ENCODE measurements at regions of chr22 and their contacts with region 1.

Region 1: DNA sequence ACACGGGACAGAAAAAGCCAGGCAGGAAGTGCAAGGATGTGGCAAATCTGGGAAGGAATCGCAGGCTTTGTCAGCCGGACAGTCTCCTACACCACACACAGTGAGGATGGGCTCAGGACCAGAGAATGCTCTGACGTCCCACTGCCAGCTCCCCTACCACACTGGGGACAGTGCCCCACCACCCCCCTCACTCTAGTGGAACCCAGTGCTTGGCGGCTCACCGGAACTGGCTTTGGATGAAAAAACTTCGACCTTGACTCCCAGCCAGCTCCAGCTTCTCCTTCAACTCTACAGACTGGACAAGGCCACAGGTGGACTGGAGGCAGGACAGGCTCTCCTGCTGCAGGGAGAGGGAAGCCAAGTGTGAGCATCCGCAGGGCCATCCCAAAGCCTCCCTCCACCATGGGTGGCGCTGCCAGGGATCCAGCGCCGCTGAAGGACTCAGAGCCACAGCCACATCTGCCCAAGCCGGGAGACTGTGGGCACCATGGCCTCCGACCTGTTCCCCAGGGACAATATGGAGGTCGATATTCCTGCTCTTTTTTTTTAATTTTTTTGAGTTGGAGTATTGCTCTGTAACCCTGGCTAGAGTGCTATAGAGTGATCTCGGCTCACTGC is 24.0 kb downstream of the SERHL2 start:
- DNase-seq: no peak
- H3K4me3 ChIP-seq: no peak overlapping the region
- H3K27ac ChIP-seq: no peak overlapping the region
- H3K4me1 ChIP-seq: peaks cover 3% of the 10 kb centered on the region
- H3K27me3 ChIP-seq: no peaks in the 10 kb centered on the region
- CTCF ChIP-seq: no peak
- POLR2A ChIP-seq: no peak

Region 2: DNA sequence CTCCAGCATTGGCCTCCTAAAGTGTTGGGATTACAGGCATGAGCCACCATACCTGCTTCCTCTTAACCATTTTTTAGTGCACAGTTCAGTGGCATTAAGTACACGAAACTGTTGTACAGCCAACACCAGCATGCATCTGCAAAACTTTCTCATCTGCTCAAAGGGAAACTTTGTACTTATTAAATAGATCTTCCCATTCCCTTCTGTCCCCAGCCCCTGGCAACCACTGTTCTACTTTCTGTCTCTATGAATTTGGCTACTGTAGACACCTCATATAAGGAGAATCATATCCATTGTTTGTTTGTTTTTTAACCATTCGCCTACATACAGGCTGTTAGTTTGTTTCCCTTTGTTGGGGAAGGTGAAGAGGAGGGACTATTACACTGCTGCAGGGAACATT is 1491.9 kb before region 1 on chr22:
- CTCF ChIA-PET with region 1: no interaction called
- POLR2A ChIA-PET with region 1: no interaction called
- dilution Hi-C with region 1: no loop called
- intact Hi-C with region 1: loop called (anchors 10 kb)
- DNase-seq: no peak
- H3K4me3 ChIP-seq: no peak overlapping the region
- H3K27ac ChIP-seq: no peak overlapping the region
- H3K4me1 ChIP-seq: peaks cover 2% of the 10 kb centered on the region
- H3K27me3 ChIP-seq: peaks cover 0 to 4% of the 10 kb centered on the region in 2 experiments
- CTCF ChIP-seq: no peak
- POLR2A ChIP-seq: no peak

Region 3: DNA sequence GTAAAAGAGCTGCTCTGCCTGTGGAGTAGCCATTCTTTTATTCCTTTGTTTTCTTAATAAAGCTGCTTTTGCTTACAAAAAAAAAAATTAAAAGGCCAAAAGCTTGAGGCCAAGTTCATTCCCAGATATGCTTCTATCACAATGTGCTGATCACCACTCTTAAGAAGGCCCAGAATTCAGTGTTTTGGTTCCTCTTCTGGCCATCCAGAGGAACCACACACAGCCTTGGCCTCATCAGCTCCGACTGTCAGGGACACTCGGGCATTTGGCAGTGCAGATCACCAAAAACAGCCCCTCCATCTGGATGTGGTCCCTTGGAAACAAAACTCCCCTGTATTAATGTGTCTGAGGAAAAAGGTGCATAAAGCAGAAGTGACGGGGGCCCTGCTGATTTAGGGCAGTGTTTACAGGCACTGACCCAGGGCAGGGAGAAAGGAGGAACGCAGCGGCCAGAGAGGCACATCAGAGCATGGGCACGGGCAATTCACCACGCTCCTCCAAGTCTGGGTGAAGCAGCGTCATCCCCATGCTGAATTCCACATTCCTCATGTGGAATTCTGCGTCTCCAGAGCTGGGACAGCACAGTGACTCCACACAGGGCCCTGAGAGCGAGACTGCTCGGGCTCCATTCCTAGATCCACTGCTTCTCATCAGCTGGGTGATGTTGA is 19.3 kb after region 1 on chr22:
- CTCF ChIA-PET with region 1: no interaction called
- POLR2A ChIA-PET with region 1: no interaction called
- dilution Hi-C with region 1: no loop called
- intact Hi-C with region 1: no loop called
- DNase-seq: no peak
- H3K4me3 ChIP-seq: no peak overlapping the region
- H3K27ac ChIP-seq: no peak overlapping the region
- H3K4me1 ChIP-seq: no peaks in the 10 kb centered on the region
- H3K27me3 ChIP-seq: no peaks in the 10 kb centered on the region
- CTCF ChIP-seq: no peak
- POLR2A ChIP-seq: no peak

Measured in endothelial cell of umbilical vein (primary cell).